ENCODE measurements at regions of chr2 and their contacts with region 1.

Region 1: DNA sequence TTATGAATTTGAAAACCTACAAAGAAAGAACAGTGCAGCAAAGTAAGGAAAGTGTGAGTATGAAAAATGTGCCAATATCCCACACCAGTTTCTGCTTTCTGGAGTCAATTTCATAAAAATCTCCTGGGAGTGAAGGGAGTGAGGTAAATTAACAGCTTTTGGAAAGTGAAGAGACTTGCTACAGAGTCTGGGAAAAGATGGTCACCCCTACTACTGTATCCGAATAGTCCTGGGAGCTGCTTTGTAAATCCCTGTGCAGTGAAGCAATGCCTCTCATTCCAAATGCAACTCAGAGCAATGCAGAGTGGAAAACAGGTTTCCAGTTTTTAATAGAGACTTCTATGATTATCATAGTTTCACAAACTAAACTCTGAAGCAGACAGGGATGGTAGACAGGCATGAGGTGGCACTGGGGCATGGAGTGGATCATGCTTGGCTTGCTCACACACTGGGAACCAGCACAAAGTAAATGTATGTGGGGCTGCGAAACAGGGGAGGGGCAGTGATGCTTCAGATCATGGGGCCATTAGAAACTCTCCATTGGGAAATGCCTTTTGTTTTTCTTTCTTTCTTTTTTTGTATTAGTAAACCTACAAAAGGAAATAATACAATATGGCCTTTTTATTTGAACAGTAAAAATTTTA is 10.6 kb downstream of the COL5A2 start:
- DNase-seq: no peak
- H3K4me3 ChIP-seq: no peak overlapping the region
- CTCF ChIP-seq: no peak

Region 2: GRCh38 chr2:189179570-189179950 is 10.6 kb after region 1 on chr2 and contains the start of gene COL5A2:
- CTCF ChIA-PET with region 1: interaction called, 10 read pairs
- POLR2A ChIA-PET with region 1: interaction called, 6 read pairs
- DNase-seq: peak; percentile 80
- H3K4me3 ChIP-seq: peak within 1 kb of the TSS; percentile 79
- CTCF ChIP-seq: no peak